ENCODE measurements at regions of chr11 and their contacts with region 1.

Region 1: GRCh38 chr11:70818351-70818750 is 420.0 kb downstream of the CTTN start:
- DNase-seq: no peak
- H3K4me3 ChIP-seq: no peak overlapping the region
- H3K27ac ChIP-seq: no peak overlapping the region
- H3K4me1 ChIP-seq: peaks cover 0 to 6% (median 0%) of the 10 kb centered on the region in 4 experiments; a peak in 2 of 7 replicates
- H3K27me3 ChIP-seq: no peaks in the 10 kb centered on the region
- CTCF ChIP-seq: no peak
- EP300 ChIP-seq: no peak
- POLR2A ChIP-seq: no peak
- RAD21 ChIP-seq: no peak

Region 2: GRCh38 chr11:70790653-70791300 is 27.6 kb before region 1 on chr11:
- CTCF ChIA-PET with region 1: interaction called, 14 read pairs
- POLR2A ChIA-PET with region 1: no interaction called
- DNase-seq: peak; percentile 19 to 66
- H3K4me3 ChIP-seq: no peak overlapping the region
- H3K27ac ChIP-seq: no peak overlapping the region
- H3K4me1 ChIP-seq: no peaks in the 10 kb centered on the region
- H3K27me3 ChIP-seq: no peaks in the 10 kb centered on the region; a peak in 1 of 7 replicates
- CTCF ChIP-seq: peak; percentile 75 to 83 (median 79)
- EP300 ChIP-seq: no peak
- POLR2A ChIP-seq: no peak
- RAD21 ChIP-seq: peak; percentile 76 to 80

Region 3: DNA sequence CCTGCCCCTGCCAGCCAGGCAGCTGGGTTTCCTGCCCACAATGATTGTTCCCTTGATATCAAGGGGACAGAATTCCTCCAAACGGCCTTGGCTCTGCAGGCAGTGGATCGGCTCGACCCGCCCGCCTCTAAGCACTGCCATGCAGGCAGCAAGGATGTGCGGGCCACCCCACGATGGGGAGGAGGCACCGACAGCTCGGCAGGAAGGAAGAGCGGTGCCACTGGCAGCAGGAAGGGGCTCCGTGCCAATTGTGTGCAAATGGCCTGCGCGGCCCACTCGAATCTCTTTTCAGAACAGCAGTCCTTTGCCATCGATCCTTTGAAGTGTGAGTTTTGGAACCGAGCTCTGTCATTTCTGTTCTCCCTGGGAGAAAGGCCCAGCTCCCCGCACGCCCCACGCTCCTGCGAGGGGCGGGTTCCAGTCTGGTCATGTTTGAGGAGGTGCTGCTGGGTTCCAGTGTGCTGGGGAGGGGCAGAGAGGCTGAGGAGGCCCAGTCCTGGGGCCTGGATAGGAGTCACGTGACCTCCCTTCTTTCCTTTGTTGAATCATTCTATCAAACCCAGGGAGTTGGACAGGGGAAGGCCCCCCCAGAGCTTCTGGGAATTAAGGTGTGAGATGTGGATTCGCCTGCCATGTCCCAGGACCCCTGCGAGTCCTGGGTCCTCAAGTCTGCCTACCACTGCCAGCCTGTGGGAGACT is 14.1 kb before region 1 on chr11:
- CTCF ChIA-PET with region 1: interaction called, 21 read pairs
- POLR2A ChIA-PET with region 1: interaction called, 8 read pairs
- DNase-seq: no peak
- H3K4me3 ChIP-seq: no peak overlapping the region
- H3K27ac ChIP-seq: no peak overlapping the region
- H3K4me1 ChIP-seq: peaks cover 0 to 4% (median 0%) of the 10 kb centered on the region in 4 experiments; a peak in 1 of 7 replicates
- H3K27me3 ChIP-seq: no peaks in the 10 kb centered on the region
- CTCF ChIP-seq: no peak
- EP300 ChIP-seq: no peak
- POLR2A ChIP-seq: no peak
- RAD21 ChIP-seq: no peak

Region 4: DNA sequence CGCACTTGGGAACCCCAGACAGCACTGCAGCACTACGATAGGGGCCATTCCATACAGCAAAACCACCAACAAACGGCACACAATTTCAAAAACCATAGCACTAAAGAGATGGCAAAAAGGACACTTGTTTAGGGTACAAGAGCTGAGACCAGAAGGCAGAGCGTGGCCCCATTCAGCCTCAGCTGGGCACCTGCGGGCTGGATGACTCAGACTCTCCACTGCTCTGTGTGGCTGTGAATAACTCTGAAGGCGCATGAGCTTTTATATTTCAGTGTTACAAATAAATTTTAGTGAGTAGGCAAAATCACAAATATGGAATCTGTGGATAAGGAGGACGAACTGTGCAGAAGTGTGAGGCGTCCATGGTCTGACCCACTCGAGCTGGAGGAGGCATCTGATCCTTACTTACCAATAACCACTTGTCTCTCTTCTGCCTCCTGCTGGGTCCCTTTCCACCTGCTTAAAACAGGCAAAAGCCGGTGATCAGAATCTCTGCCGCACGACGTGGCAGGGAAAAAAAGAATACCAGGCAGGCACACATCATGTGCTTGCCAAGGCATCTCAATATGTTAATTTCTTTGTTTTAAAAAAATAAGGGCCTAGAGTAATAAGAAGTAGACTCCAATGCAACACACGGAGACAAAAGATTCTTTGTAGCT is 108.3 kb after region 1 on chr11:
- CTCF ChIA-PET with region 1: interaction called, 11 read pairs
- POLR2A ChIA-PET with region 1: no interaction called
- DNase-seq: no peak
- H3K4me3 ChIP-seq: no peak overlapping the region
- H3K27ac ChIP-seq: peak overlapping the region; percentile 51; the same call in 1 of the 2 replicates
- H3K4me1 ChIP-seq: peaks cover 3 to 14% (median 4%) of the 10 kb centered on the region in 4 experiments; a peak in 5 of 7 replicates
- H3K27me3 ChIP-seq: no peaks in the 10 kb centered on the region
- CTCF ChIP-seq: peak in 2 of 3 experiments; percentile 30 to 34; a peak in 2 of 4 replicates
- EP300 ChIP-seq: no peak
- POLR2A ChIP-seq: no peak
- RAD21 ChIP-seq: peak in 1 of 2 experiments; percentile 35; a peak in 2 of 4 replicates

Region 5: GRCh38 chr11:71080239-71081097 is 262.1 kb after region 1 on chr11:
- CTCF ChIA-PET with region 1: interaction called, 39 read pairs
- POLR2A ChIA-PET with region 1: interaction called, 3 read pairs
- DNase-seq: peak; percentile 46 to 88
- H3K4me3 ChIP-seq: no peak overlapping the region
- H3K27ac ChIP-seq: no peak overlapping the region
- H3K4me1 ChIP-seq: peaks cover 0 to 4% (median 0%) of the 10 kb centered on the region in 4 experiments; a peak in 1 of 7 replicates
- H3K27me3 ChIP-seq: no peaks in the 10 kb centered on the region
- CTCF ChIP-seq: peak; percentile 96 to 100 (median 99)
- EP300 ChIP-seq: no peak
- POLR2A ChIP-seq: no peak
- RAD21 ChIP-seq: peak; percentile 80 to 91